CD4-positive, alpha-beta memory T cell (primary cell): ENCODE measurements at regions of chr17 and their contacts with region 1.

Region 1: DNA sequence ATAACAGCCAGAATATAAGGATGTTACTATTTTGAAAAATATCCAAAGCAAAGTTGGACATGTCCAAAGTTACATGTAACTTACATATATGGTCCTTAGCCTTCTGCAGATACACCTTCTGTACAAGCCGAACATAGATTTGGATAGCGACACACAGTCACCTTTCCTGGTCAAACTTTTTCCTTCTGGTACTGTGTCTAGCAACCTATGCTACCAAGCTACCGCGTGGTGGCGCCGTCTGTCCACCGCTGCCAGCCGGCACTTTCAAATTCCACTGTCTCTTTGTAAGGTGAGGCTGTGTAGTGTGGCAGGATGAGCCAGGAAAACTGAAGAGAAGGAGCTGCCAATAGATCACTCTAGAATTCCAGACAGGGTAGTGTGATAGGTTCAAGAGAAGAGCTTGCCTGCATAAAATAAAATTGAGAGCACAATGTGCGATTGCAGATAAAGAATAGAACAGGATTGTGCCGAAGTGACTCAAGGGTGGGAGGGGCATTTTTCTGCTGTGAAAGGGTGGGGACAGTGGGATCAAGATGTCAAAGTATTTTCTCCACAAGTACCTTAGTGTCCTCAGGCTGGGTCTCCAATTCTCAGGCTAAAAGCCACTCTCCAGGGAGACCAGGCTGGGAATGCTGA is 366.9 kb downstream of the SLC39A11 start:
- DNase-seq: peak in 4 of 5 donors; percentile 23 to 42 (median 28)
- H3K4me3 ChIP-seq: no peak overlapping the region
- H3K4me3 Mint-ChIP-seq: peak overlapping the region in 6 of 8 donors; percentile 25 to 87 (median 56)
- H3K27ac ChIP-seq: no peak overlapping the region
- H3K27ac Mint-ChIP-seq: peak overlapping the region; percentile 6 to 94 (median 31)
- H3K4me1 ChIP-seq: peaks cover 31% of the 10 kb centered on the region
- H3K4me1 Mint-ChIP-seq: peaks cover 25 to 38% (median 31%) of the 10 kb centered on the region in 4 donors
- H3K27me3 ChIP-seq: no peaks in the 10 kb centered on the region
- H3K27me3 Mint-ChIP-seq: no peaks in the 10 kb centered on the region

Region 2: DNA sequence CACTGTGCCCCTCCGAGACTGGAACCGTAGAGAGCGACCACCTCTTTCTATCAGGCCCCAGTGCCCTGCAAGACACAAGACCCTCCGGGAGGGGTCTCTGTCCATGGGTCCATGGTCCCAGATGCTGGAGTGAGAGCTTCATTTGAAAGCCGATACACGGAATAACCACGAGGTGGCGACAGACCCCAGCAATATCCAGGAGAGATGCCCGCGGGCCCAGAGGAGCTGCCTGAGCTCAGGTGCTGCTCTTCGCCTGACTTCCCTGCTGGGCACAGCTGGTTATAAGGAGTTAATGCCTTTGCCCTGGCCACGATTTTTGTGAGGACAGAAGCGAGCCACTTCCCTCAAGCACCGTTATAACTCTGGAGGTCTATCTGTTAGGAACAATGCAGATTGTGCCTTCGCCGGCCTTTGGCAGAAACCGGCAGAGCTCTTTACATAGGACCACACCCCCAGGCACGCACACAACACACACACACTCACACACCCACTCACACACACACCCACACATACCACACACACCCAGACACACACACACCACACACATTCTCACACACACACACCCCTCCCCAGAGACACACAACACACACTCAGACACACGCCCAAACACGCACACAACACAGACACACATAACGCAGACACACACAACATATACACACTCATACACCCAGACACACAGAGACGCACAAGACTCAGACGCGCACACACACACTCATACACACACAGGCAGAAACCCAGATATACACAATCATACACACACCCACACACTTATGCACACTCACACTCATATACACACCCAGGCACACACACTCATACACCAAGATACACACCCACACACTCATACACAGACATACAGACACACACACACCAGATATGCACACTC is 168.4 kb before region 1 on chr17:
- CTCF ChIA-PET with region 1: interaction called, 205 read pairs
- POLR2A ChIA-PET with region 1: interaction called, 11 read pairs
- intact Hi-C with region 1: loop called (anchors 1 kb)
- DNase-seq: peak; percentile 42 to 54 (median 46)
- H3K4me3 ChIP-seq: no peak overlapping the region
- H3K4me3 Mint-ChIP-seq: no peak overlapping the region
- H3K27ac ChIP-seq: no peak overlapping the region
- H3K27ac Mint-ChIP-seq: no peak overlapping the region
- H3K4me1 ChIP-seq: no peaks in the 10 kb centered on the region
- H3K4me1 Mint-ChIP-seq: peaks cover 0 to 4% (median under 1%) of the 10 kb centered on the region in 4 donors
- H3K27me3 ChIP-seq: no peaks in the 10 kb centered on the region
- H3K27me3 Mint-ChIP-seq: peaks cover 0 to 2% of the 10 kb centered on the region in 2 donors

Region 3: GRCh38 chr17:72985881-72986720 is 260.6 kb after region 1 on chr17:
- CTCF ChIA-PET with region 1: interaction called, 72 read pairs
- POLR2A ChIA-PET with region 1: interaction called, 5 read pairs
- intact Hi-C with region 1: loop called (anchors 5 kb)
- DNase-seq: peak in 4 of 5 donors; percentile 42 to 49 (median 44)
- H3K4me3 ChIP-seq: no peak overlapping the region
- H3K4me3 Mint-ChIP-seq: no peak overlapping the region
- H3K27ac ChIP-seq: no peak overlapping the region
- H3K27ac Mint-ChIP-seq: no peak overlapping the region
- H3K4me1 ChIP-seq: no peaks in the 10 kb centered on the region
- H3K4me1 Mint-ChIP-seq: peaks cover 0 to 3% (median under 1%) of the 10 kb centered on the region in 4 donors
- H3K27me3 ChIP-seq: no peaks in the 10 kb centered on the region
- H3K27me3 Mint-ChIP-seq: no peaks in the 10 kb centered on the region

Region 4: DNA sequence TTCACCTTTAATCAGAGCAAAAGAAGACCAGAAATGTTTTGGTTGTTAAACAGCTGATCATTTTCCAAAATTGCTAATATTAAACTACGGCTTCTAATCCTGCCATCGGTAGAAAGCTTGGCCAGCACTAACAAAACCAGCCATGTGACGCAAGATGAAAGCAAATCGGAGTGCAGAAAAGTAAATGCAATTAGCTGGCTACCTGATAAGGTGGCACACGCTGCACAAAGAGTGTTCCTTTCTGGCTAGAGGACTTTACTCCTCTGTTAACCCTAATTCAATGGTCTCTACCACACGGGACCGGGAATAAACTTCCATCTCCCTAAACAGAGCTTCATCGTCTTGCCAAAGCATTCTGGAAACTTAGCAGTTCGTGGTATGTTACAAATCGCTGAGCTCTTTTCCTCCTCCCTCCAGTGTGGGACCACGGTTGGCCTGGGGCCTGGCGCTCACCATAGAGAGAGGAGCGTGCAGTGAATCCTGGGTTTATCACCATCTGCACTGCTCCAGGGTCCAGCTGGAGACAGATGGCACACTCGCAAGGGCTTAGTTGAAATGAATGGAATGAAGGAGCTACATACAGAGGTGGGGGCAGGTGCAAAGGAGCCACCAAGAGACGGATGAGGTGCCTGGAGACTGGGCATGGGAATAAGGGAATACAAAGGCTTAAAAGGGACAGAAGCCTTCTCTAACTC is 457.2 kb after region 1 on chr17:
- CTCF ChIA-PET with region 1: interaction called, 70 read pairs
- POLR2A ChIA-PET with region 1: no interaction called
- intact Hi-C with region 1: no loop called
- DNase-seq: no peak
- H3K4me3 ChIP-seq: no peak overlapping the region
- H3K4me3 Mint-ChIP-seq: no peak overlapping the region
- H3K27ac ChIP-seq: no peak overlapping the region
- H3K27ac Mint-ChIP-seq: peak overlapping the region in 1 of 7 donors; percentile 66
- H3K4me1 ChIP-seq: no peaks in the 10 kb centered on the region
- H3K4me1 Mint-ChIP-seq: no peaks in the 10 kb centered on the region
- H3K27me3 ChIP-seq: no peaks in the 10 kb centered on the region
- H3K27me3 Mint-ChIP-seq: no peaks in the 10 kb centered on the region

Region 5: DNA sequence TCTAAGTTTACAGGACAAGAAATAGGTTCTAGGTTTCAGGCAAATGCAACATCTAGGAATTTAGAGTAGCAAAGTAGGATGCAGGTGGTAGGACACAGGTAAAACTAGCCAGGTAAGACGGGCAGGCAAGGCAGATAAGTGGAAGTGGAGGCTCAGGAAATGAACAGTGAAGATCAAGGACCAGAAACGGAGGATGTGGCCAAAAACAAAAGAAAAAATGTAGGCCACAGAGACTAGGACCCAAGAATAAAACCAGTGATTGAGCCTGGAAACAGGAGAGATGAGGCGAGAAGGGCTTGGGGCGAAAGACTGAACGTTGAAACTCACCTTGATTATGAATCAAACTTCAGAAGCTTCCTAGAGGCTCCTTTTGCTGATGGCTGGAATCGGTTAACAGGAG is 512.2 kb after region 1 on chr17:
- CTCF ChIA-PET with region 1: interaction called, 15 read pairs
- POLR2A ChIA-PET with region 1: interaction called, 10 read pairs
- intact Hi-C with region 1: no loop called
- DNase-seq: peak in 3 of 5 donors; percentile 21 to 31 (median 24)
- H3K4me3 ChIP-seq: no peak overlapping the region
- H3K4me3 Mint-ChIP-seq: peak overlapping the region; percentile 21 to 74 (median 47)
- H3K27ac ChIP-seq: no peak overlapping the region
- H3K27ac Mint-ChIP-seq: peak overlapping the region; percentile 36 to 81 (median 77)
- H3K4me1 ChIP-seq: peaks cover 45% of the 10 kb centered on the region
- H3K4me1 Mint-ChIP-seq: peaks cover 29 to 65% (median 48%) of the 10 kb centered on the region in 4 donors
- H3K27me3 ChIP-seq: no peaks in the 10 kb centered on the region
- H3K27me3 Mint-ChIP-seq: no peaks in the 10 kb centered on the region

Region 6: DNA sequence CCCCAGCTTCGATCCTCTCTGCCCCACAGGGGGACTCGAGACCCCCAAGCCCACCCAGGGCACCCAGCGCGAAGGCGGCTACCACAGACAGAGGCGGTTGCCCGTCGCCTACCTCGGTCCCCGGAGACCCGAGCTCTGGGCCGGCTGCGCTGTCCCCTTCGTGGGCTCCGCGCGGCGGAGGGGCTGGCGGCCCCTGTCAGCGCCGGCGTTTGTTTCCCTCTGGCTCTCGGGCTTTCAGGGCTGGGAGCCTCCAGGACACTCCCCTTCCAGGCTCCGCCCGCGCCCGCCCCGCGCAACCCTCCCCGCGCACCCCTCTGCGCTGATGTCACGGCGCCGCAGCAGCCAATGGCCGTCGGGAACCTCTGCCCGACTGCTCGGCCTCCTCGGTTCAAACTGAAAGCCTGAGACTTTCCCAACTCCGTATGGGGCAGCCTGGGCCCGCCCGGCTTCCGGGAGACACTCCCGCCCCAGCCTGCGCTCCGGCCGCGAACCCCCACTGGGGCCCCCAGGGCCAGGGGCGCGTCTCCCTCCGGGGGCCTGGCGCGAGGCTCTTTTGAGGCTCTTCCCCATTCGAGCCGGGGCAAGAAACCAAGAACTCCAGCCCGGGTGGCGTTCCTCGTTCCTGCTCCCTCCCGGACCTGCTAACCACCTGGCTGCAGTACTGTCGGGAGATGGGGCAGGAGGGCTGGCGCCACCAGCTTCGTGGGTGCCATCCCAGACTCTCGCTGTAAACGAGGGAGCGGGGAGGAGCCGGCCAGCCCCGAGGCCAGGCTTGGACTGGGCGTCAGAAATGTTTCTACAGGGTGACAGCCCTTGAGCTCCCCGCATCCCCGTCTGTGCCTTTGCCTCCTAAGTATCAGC is 586.5 kb after region 1 on chr17 and contains the start of gene CDC42EP4:
- CTCF ChIA-PET with region 1: interaction called, 9 read pairs
- POLR2A ChIA-PET with region 1: interaction called, 4 read pairs
- intact Hi-C with region 1: loop called (anchors 2 kb)
- DNase-seq: peak; percentile 81 to 88 (median 81)
- H3K4me3 ChIP-seq: peak within 1 kb of the TSS; percentile 57 to 80
- H3K4me3 Mint-ChIP-seq: peak within 1 kb of the TSS; percentile 85 to 92 (median 88)
- H3K27ac ChIP-seq: peak within 1 kb of the TSS; percentile 63
- H3K27ac Mint-ChIP-seq: peak within 1 kb of the TSS; percentile 73 to 88 (median 82)
- H3K4me1 ChIP-seq: peaks cover 15% of the 10 kb centered on the region
- H3K4me1 Mint-ChIP-seq: peaks cover 6 to 19% (median 13%) of the 10 kb centered on the region in 4 donors
- H3K27me3 ChIP-seq: no peaks in the 10 kb centered on the region
- H3K27me3 Mint-ChIP-seq: no peaks in the 10 kb centered on the region
- total RNA-seq, gene CDC42EP4: 1.1 to 1.4 TPM